Dendritic cell treated with granulocyte-macrophage colony-stimulating factor and Interleukin-4, amounts not matched to agents 40 ng/mL and 50 ng/mL, for 4 days (primary cell): ENCODE measurements at regions of chr1 and their contacts with region 1.

Region 1: GRCh38 chr1:197868751-197869489 is 33.5 kb upstream of the C1orf53 start:
- H3K4me3 Mint-ChIP-seq: no peak overlapping the region
- H3K27ac Mint-ChIP-seq: no peak overlapping the region
- H3K4me1 Mint-ChIP-seq: peaks cover 7% of the 10 kb centered on the region
- H3K27me3 Mint-ChIP-seq: no peaks in the 10 kb centered on the region

Region 2: DNA sequence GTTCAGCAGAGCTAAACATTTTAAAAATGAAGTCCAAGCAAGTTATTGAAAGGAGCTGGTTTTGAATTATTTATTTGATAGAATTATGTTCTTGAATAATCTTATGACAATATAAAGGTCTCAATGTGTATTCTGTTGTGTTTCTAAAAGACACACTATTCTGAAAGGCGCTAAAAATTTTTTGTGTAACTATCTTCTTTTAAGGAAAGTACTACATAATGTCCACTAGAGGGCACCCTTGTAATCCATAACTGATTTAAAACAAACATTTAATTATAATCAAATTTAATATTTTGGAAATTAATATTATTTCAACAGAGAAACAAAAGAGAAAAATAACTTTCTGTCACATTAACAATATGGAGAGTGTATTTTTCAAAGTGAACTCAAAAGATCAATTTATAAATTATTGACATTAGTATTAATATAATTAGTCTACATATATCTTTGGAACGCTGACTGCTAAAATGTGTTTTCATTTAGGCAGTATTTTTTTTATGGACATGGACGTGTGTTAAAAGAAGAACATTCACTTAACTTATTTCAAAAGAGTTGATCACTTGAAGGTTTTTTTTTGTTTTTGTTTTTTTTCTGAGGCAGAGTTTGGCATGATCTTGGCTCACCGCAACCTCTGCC is 342.1 kb before region 1 on chr1:
- intact Hi-C with region 1: loop called (anchors 5 kb)
- H3K4me3 Mint-ChIP-seq: no peak overlapping the region
- H3K27ac Mint-ChIP-seq: no peak overlapping the region
- H3K4me1 Mint-ChIP-seq: no peaks in the 10 kb centered on the region
- H3K27me3 Mint-ChIP-seq: no peaks in the 10 kb centered on the region

Region 3: GRCh38 chr1:197614916-197615692 is 253.8 kb before region 1 on chr1:
- intact Hi-C with region 1: loop called (anchors 2 kb)
- H3K4me3 Mint-ChIP-seq: no peak overlapping the region
- H3K27ac Mint-ChIP-seq: no peak overlapping the region
- H3K4me1 Mint-ChIP-seq: no peaks in the 10 kb centered on the region
- H3K27me3 Mint-ChIP-seq: no peaks in the 10 kb centered on the region

Region 4: GRCh38 chr1:197692965-197693364 is 176.0 kb before region 1 on chr1:
- intact Hi-C with region 1: loop called (anchors 5 kb)
- H3K4me3 Mint-ChIP-seq: no peak overlapping the region
- H3K27ac Mint-ChIP-seq: no peak overlapping the region
- H3K4me1 Mint-ChIP-seq: peaks cover 28% of the 10 kb centered on the region
- H3K27me3 Mint-ChIP-seq: no peaks in the 10 kb centered on the region

Region 5: DNA sequence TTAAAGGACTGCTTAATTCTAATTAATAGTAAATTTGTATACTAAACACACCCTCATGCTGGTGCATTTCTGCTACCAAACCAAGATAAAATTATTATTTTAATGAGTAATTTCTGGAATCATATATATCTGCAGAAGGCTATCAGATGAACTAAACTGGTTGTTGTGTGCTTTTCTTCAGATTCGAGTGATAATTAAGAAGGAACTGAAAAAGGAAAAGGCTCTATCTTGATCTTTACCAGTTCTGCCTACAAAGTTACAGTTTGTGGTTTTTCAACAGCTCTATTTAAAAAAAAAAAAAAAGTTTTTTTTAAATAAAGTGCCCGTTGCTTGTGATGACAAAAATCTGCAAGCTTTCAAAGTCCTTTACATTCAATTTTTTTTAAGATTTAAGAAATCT is 107.3 kb before region 1 on chr1:
- intact Hi-C with region 1: loop called (anchors 10 kb)
- H3K4me3 Mint-ChIP-seq: no peak overlapping the region
- H3K27ac Mint-ChIP-seq: no peak overlapping the region
- H3K4me1 Mint-ChIP-seq: peaks cover 26% of the 10 kb centered on the region
- H3K27me3 Mint-ChIP-seq: no peaks in the 10 kb centered on the region

Region 6: GRCh38 chr1:197783510-197783948 is 85.4 kb before region 1 on chr1:
- intact Hi-C with region 1: loop called (anchors 5 kb)
- H3K4me3 Mint-ChIP-seq: no peak overlapping the region
- H3K27ac Mint-ChIP-seq: peak overlapping the region; percentile 80
- H3K4me1 Mint-ChIP-seq: peaks cover 35% of the 10 kb centered on the region
- H3K27me3 Mint-ChIP-seq: no peaks in the 10 kb centered on the region